Spleen (tissue), 13 donors: ENCODE measurements at regions of chr13 and their contacts with region 1.

Region 1: DNA sequence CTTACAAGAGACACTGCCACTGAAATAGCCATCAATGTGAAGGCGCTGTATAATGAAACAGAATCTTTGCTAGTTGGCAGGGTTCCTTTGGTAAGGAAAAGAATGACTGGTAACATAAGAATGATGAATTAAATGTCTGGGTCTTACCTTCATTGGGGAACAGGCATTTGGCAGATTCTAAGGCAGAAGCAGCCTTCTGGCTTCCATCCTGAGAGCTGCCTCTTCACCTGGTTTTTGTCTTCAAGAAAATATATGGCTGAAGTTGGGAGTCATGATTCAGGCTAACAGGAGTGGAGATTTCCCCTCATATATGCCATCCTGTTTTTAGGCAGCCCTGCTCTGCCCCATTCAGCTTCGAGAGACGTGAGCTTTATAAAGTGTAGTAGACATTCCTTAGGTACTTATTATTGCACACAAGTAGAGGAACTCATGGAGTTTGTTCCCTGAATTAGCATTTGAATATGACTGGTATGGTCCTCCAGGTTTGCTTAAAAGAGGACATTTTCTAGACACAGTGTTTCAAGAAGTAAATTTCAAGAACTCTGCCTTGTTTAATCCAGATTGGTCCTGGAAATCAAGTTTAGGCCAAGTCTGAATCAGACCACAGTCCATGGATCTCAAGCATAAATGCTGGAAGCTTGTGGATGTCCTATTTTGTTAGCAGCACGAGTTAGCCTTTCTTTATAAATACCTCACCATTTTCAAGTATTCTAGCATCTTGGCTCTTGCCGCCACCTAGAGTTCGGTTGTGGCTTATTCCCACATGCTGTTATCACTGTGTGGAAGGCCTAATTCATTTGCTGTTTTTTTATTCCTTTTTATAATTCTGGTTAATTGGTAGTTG is 56.2 kb upstream of the AKAP11 start:
- DNase-seq: no peak
- H3K4me3 ChIP-seq: no peak overlapping the region
- H3K27ac ChIP-seq: no peak overlapping the region
- H3K4me1 ChIP-seq: no peaks in the 10 kb centered on the region
- H3K27me3 ChIP-seq: no peaks in the 10 kb centered on the region
- CTCF ChIP-seq: peak in 3 of 11 experiments; percentile 17 to 27 (median 21)
- POLR2A ChIP-seq: no peak

Region 2: DNA sequence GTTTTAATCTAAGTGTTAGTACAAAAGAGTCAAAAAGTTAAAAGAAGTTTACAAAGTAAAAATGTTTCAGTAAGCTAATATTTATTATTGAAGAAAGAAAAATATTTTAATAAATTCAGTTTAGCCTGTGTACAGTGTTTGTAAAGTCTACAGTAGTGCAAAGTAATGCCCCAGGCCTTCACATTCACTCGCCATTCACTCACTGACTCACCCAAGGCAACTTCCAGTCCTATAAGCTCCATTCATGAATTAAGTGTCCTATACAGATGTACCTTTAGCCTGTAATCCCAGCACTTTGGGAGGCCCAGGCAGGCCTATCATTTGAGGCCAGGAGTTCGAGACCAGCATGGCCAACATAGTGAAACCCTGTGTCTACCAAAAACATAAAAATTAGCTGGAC is 32.1 kb after region 1 on chr13:
- intact Hi-C with region 1: loop called (anchors 2 kb)
- DNase-seq: no peak
- H3K4me3 ChIP-seq: no peak overlapping the region
- H3K27ac ChIP-seq: no peak overlapping the region
- H3K4me1 ChIP-seq: no peaks in the 10 kb centered on the region
- H3K27me3 ChIP-seq: no peaks in the 10 kb centered on the region
- CTCF ChIP-seq: no peak
- POLR2A ChIP-seq: no peak

Region 3: GRCh38 chr13:42320375-42320787 is 104.6 kb after region 1 on chr13:
- intact Hi-C with region 1: no loop called
- DNase-seq: no peak
- H3K4me3 ChIP-seq: no peak overlapping the region
- H3K27ac ChIP-seq: no peak overlapping the region
- H3K4me1 ChIP-seq: peaks cover 0 to 8% (median 0%) of the 10 kb centered on the region in 6 donors
- H3K27me3 ChIP-seq: no peaks in the 10 kb centered on the region
- CTCF ChIP-seq: no peak
- POLR2A ChIP-seq: no peak